Dorsolateral prefrontal cortex (tissue), 120 donors: ENCODE measurements at regions of chr19 and their contacts with region 1.

Region 1: GRCh38 chr19:48513289-48514122 is 1.9 kb upstream of the LMTK3 start:
- DNase-seq: peak; percentile 67 to 93 (median 90)
- H3K4me3 ChIP-seq: peak overlapping the region; percentile 52 to 87 (median 77)
- H3K27ac ChIP-seq: peak overlapping the region in 58 of 59 donors; percentile 74 to 97 (median 90)
- H3K27me3 ChIP-seq: peaks cover 0 to 3% (median 0%) of the 10 kb centered on the region in 45 donors
- CTCF ChIP-seq: peak in 16 of 56 donors; percentile 6 to 35 (median 18)

Region 2: GRCh38 chr19:47494729-47495128 is 1018.8 kb before region 1 on chr19:
- intact Hi-C with region 1: no loop called
- DNase-seq: no peak
- H3K4me3 ChIP-seq: no peak overlapping the region
- H3K27ac ChIP-seq: peak overlapping the region in 51 of 59 donors; percentile 4 to 96 (median 82)
- H3K27me3 ChIP-seq: no peaks in the 10 kb centered on the region
- CTCF ChIP-seq: no peak

Region 3: GRCh38 chr19:48569814-48570213 is 56.3 kb after region 1 on chr19:
- intact Hi-C with region 1: loop called in 1 of 2 experiments (anchors 5 kb)
- DNase-seq: no peak
- H3K4me3 ChIP-seq: no peak overlapping the region
- H3K27ac ChIP-seq: no peak overlapping the region
- H3K27me3 ChIP-seq: peaks cover 0 to 6% (median 0%) of the 10 kb centered on the region in 45 donors
- CTCF ChIP-seq: no peak